B cell (primary cell): ENCODE measurements at regions of chr20 and their contacts with region 1.

Region 1: GRCh38 chr20:45971675-45972499 is at the start of gene ZNF335:
- DNase-seq: peak; percentile 99
- ATAC-seq: peak; percentile 80
- H3K4me3 ChIP-seq: peak within 1 kb of the TSS; percentile 89 to 99 (median 95)
- H3K4me3 Mint-ChIP-seq: peak within 1 kb of the TSS; percentile 93
- H3K27ac ChIP-seq: peak within 1 kb of the TSS; percentile 99 to 100
- H3K27ac Mint-ChIP-seq: peak within 1 kb of the TSS; percentile 100
- H3K4me1 ChIP-seq: peaks cover 23 to 27% of the 10 kb centered on the region in 2 donors
- H3K4me1 Mint-ChIP-seq: peaks cover 24% of the 10 kb centered on the region
- H3K27me3 ChIP-seq: no peaks in the 10 kb centered on the region
- H3K27me3 Mint-ChIP-seq: no peaks in the 10 kb centered on the region
- CTCF ChIP-seq: no peak
- total RNA-seq, gene ZNF335: 62.7 and 64.8 TPM in 2 replicates

Region 2: GRCh38 chr20:45362804-45363610 is 608.9 kb before region 1 on chr20 and contains the start of gene SYS1:
- CTCF ChIA-PET with region 1: no interaction called
- POLR2A ChIA-PET with region 1: no interaction called
- intact Hi-C with region 1: loop called (anchors 5 kb)
- DNase-seq: peak; percentile 99
- ATAC-seq: peak; percentile 82
- H3K4me3 ChIP-seq: peak within 1 kb of the TSS; percentile 79 to 88 (median 85)
- H3K4me3 Mint-ChIP-seq: peak within 1 kb of the TSS; percentile 99
- H3K27ac ChIP-seq: peak within 1 kb of the TSS; percentile 86 to 99
- H3K27ac Mint-ChIP-seq: peak within 1 kb of the TSS; percentile 99
- H3K4me1 ChIP-seq: peaks cover 47 to 49% of the 10 kb centered on the region in 2 donors
- H3K4me1 Mint-ChIP-seq: peaks cover 49% of the 10 kb centered on the region
- H3K27me3 ChIP-seq: peaks cover 0 to 5% (median 0%) of the 10 kb centered on the region in 4 experiments
- H3K27me3 Mint-ChIP-seq: no peaks in the 10 kb centered on the region
- CTCF ChIP-seq: peak; percentile 86
- total RNA-seq, gene SYS1: 57.7 and 61.4 TPM in 2 replicates

Region 3: GRCh38 chr20:45812157-45813020 is 159.5 kb before region 1 on chr20 and contains the start of gene UBE2C:
- CTCF ChIA-PET with region 1: interaction called, 4 read pairs
- POLR2A ChIA-PET with region 1: no interaction called
- intact Hi-C with region 1: loop called (anchors 1 kb)
- DNase-seq: peak; percentile 96
- ATAC-seq: peak; percentile 100
- H3K4me3 ChIP-seq: peak within 1 kb of the TSS in 4 of 5 experiments; percentile 52 to 85 (median 65)
- H3K4me3 Mint-ChIP-seq: peak within 1 kb of the TSS; percentile 88
- H3K27ac ChIP-seq: no peak within 1 kb of the TSS
- H3K27ac Mint-ChIP-seq: peak within 1 kb of the TSS; percentile 70
- H3K4me1 ChIP-seq: peaks cover 9 to 16% of the 10 kb centered on the region in 2 donors
- H3K4me1 Mint-ChIP-seq: peaks cover 16% of the 10 kb centered on the region
- H3K27me3 ChIP-seq: peaks cover 0 to 2% (median 0%) of the 10 kb centered on the region in 4 experiments
- H3K27me3 Mint-ChIP-seq: no peaks in the 10 kb centered on the region
- CTCF ChIP-seq: no peak
- total RNA-seq, gene UBE2C: 0.54 TPM in 1 of 2 replicates, not detected in the other

Region 4: GRCh38 chr20:45890985-45891983 is 80.6 kb before region 1 on chr20 and contains the starts of genes CTSA and NEURL2:
- CTCF ChIA-PET with region 1: interaction called, 24 read pairs
- POLR2A ChIA-PET with region 1: interaction called, 7 read pairs
- intact Hi-C with region 1: loop called (anchors 1 kb)
- DNase-seq: peak; percentile 91
- ATAC-seq: peak; percentile 83
- H3K4me3 ChIP-seq: peak within 1 kb of the TSS; percentile 22 to 95 (median 78)
- H3K4me3 Mint-ChIP-seq: peak within 1 kb of the TSS; percentile 97
- H3K27ac ChIP-seq: peak within 1 kb of the TSS; percentile 51 to 80
- H3K27ac Mint-ChIP-seq: peak within 1 kb of the TSS; percentile 96
- H3K4me1 ChIP-seq: peaks cover 24 to 29% of the 10 kb centered on the region in 2 donors
- H3K4me1 Mint-ChIP-seq: peaks cover 31% of the 10 kb centered on the region
- H3K27me3 ChIP-seq: no peaks in the 10 kb centered on the region
- H3K27me3 Mint-ChIP-seq: no peaks in the 10 kb centered on the region
- CTCF ChIP-seq: no peak
- total RNA-seq, gene CTSA: 100 and 113 TPM in 2 replicates
- total RNA-seq, gene NEURL2: 4.1 and 5.4 TPM in 2 replicates

Region 5: GRCh38 chr20:45948742-45949541 is 22.9 kb before region 1 on chr20:
- CTCF ChIA-PET with region 1: interaction called, 11 read pairs
- POLR2A ChIA-PET with region 1: interaction called, 5 read pairs
- intact Hi-C with region 1: no loop called
- DNase-seq: peak; percentile 22
- ATAC-seq: no peak
- H3K4me3 ChIP-seq: no peak overlapping the region
- H3K4me3 Mint-ChIP-seq: no peak overlapping the region
- H3K27ac ChIP-seq: no peak overlapping the region
- H3K27ac Mint-ChIP-seq: peak overlapping the region; percentile 33
- H3K4me1 ChIP-seq: no peaks in the 10 kb centered on the region
- H3K4me1 Mint-ChIP-seq: peaks cover 4% of the 10 kb centered on the region
- H3K27me3 ChIP-seq: no peaks in the 10 kb centered on the region
- H3K27me3 Mint-ChIP-seq: no peaks in the 10 kb centered on the region
- CTCF ChIP-seq: no peak

Region 6: DNA sequence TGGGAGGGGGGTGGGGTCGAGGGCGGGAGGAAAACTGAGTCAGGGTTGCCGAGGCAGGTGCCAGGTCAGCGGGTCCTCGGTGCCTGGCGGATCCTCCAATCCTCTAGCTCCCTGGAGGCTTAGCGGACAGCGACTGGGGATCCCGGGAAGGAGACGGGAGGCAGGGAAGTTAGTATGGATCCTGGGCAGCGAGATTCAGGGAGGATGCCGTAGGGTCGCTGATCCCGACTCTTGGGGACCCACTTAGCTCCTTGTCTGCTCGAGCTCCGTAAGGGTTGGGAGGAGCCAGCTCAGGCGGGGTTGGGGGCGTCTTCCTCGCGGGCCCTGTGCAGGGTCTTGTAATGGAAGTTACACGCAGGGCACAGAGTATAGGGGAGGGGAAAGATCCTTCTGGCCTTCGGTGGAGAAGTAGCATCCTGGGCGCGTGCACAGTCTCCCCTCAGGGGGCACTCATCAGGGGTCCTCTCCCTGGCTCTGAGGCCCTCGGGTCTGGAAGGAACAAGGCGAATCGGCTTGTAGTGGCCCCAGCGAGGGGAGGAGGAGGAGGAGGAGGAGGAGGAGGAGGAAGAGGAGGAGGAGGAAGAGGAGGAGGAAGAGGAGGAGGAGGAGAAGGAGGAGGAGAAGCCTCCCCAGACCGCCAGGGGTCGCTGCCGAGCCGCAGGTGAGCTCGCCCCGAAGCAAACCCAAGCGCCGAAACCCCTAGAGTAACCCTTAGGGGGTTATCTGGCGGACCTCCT is 50.7 kb after region 1 on chr20:
- CTCF ChIA-PET with region 1: interaction called, 10 read pairs
- POLR2A ChIA-PET with region 1: interaction called, 3 read pairs
- intact Hi-C with region 1: no loop called
- DNase-seq: peak; percentile 80
- ATAC-seq: peak; percentile 74
- H3K4me3 ChIP-seq: peak overlapping the region in 3 of 5 experiments; percentile 25 to 54 (median 27)
- H3K4me3 Mint-ChIP-seq: peak overlapping the region; percentile 64
- H3K27ac ChIP-seq: no peak overlapping the region
- H3K27ac Mint-ChIP-seq: no peak overlapping the region
- H3K4me1 ChIP-seq: peaks cover 24 to 26% of the 10 kb centered on the region in 2 donors
- H3K4me1 Mint-ChIP-seq: peaks cover 23% of the 10 kb centered on the region
- H3K27me3 ChIP-seq: peaks cover 0 to 68% (median 25%) of the 10 kb centered on the region in 4 experiments
- H3K27me3 Mint-ChIP-seq: peaks cover 39% of the 10 kb centered on the region
- CTCF ChIP-seq: peak; percentile 79

Region 7: GRCh38 chr20:46034039-46034438 is 62.2 kb after region 1 on chr20:
- CTCF ChIA-PET with region 1: no interaction called
- POLR2A ChIA-PET with region 1: no interaction called
- intact Hi-C with region 1: no loop called
- DNase-seq: no peak
- ATAC-seq: no peak
- H3K4me3 ChIP-seq: no peak overlapping the region
- H3K4me3 Mint-ChIP-seq: no peak overlapping the region
- H3K27ac ChIP-seq: no peak overlapping the region
- H3K27ac Mint-ChIP-seq: no peak overlapping the region
- H3K4me1 ChIP-seq: peaks cover 0 to 8% of the 10 kb centered on the region in 2 donors
- H3K4me1 Mint-ChIP-seq: no peaks in the 10 kb centered on the region
- H3K27me3 ChIP-seq: peaks cover 0 to 73% (median 29%) of the 10 kb centered on the region in 4 experiments
- H3K27me3 Mint-ChIP-seq: peaks cover 54% of the 10 kb centered on the region
- CTCF ChIP-seq: no peak